Dorsolateral prefrontal cortex (tissue), 120 donors: ENCODE measurements at regions of chr18 and their contacts with region 1.

Region 1: GRCh38 chr18:47930931-47931717 is 665 bp upstream of the SMAD2 start:
- DNase-seq: peak; percentile 94 to 99 (median 97)
- H3K4me3 ChIP-seq: peak overlapping the region; percentile 58 to 97 (median 85)
- H3K27ac ChIP-seq: peak overlapping the region; percentile 76 to 98 (median 96)
- H3K27me3 ChIP-seq: no peaks in the 10 kb centered on the region
- CTCF ChIP-seq: peak in 5 of 56 donors; percentile 9 to 37 (median 17)

Region 2: GRCh38 chr18:47323158-47323557 is 608.0 kb before region 1 on chr18:
- intact Hi-C with region 1: no loop called
- DNase-seq: no peak
- H3K4me3 ChIP-seq: no peak overlapping the region
- H3K27ac ChIP-seq: no peak overlapping the region
- H3K27me3 ChIP-seq: peaks cover 0 to 10% (median 0%) of the 10 kb centered on the region in 45 donors
- CTCF ChIP-seq: no peak

Region 3: DNA sequence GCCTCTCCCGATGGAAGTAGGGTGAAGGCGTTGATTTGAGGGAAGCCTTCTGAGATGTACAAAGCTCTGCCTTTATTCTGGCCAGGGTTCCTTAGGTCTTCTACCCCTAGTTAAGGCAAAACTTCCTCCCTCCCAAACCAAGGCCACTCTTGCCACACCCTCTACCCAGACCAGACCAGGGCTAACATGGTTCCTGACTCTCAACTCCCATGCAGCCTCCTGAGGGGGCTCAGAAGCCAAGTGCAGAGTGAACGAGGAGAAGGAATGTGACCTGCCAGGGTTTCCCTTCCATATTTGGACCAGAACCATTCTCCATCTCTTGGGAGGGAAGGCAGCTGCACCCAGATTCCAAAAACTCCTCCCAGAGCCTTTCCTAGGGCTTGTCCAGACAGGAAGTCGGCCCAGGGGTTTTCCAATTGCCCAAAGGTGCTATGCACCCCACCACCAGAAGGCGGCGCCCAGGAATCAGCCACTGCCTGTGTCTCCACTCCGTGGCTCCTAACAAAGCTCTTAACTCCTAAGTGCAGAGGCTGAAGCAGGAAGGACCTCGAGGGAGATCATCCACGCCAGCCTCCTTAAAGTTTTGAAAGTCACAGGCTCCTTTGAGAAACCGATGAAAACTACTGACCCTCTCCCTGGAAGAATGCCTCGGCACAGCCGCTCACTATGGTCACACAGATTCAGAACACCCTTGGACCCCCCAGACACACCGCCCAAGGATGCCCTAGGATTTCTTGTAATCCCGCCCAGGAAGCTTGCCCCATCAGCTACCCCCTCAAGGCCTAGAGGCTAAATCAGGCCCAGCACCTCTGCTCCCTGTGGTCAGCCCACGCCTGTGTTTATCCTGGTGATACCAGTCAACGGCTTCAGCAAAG is 158.5 kb before region 1 on chr18:
- intact Hi-C with region 1: loop called in 1 of 2 experiments (anchors 10 kb)
- DNase-seq: no peak
- H3K4me3 ChIP-seq: no peak overlapping the region
- H3K27ac ChIP-seq: no peak overlapping the region
- H3K27me3 ChIP-seq: peaks cover 0 to 2% (median 0%) of the 10 kb centered on the region in 45 donors
- CTCF ChIP-seq: peak in 52 of 56 donors; percentile 23 to 68 (median 49)

Region 4: DNA sequence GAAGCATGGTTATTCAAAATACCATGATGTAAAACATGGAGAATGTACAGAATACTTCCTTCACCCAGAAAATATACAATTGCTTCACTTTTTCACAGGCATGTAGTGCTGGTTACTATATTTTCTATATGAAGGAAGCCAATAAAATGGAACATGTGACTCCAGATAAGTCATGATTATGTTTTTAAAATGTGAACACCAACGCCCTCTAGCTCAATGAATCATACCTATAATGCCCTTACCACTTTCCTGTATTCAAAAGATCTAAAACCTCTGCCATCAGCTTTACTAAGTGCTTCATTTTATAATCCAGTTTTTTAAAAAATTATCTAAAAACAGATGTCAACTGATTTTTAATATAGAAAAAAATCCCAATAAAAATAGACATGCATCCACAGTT is 60.5 kb before region 1 on chr18:
- intact Hi-C with region 1: loop called in 1 of 2 experiments (anchors 5 kb)
- DNase-seq: no peak
- H3K4me3 ChIP-seq: no peak overlapping the region
- H3K27ac ChIP-seq: no peak overlapping the region
- H3K27me3 ChIP-seq: no peaks in the 10 kb centered on the region
- CTCF ChIP-seq: no peak

Region 5: DNA sequence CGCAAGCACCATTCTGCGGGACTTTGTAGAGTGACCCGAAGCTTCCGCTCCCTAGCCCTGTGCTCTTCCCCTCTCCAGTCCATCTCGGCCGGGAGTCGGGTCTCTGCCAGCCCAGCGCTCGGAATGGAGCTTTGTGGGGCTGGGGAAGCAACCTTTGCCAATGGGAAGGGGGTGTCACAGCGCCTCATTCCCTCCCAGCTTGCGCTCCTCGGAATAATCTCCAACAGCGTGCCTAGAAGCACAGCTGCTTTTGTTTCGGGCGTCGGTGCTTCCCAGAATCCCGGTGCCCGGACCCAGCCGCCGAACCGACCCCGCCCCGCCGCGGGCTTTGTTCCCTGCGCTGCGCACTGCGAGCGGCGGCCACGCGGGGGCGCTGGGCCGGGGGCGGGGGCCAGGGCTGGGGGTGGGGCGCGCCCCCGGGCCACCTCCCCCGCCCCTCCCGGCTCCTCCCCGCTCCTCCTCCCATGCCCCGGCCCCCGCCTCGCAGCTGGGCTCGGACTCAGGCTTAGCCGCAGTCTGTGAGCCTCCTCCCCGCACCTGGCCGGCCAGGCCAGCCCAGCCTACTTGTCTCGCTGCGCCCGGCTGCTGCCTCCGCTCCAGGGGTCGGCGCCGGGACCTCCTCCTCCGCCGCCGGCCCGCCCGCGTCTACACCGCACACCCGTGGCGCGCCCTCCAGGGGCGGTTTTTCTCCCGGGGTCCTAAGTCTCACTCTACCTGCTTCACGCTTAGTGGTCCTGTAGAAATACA is 77.0 kb after region 1 on chr18:
- intact Hi-C with region 1: loop called in 1 of 2 experiments (anchors 5 kb)
- DNase-seq: peak in 4 of 10 donors; percentile 26 to 68 (median 52)
- H3K4me3 ChIP-seq: peak overlapping the region; percentile 42 to 73 (median 62)
- H3K27ac ChIP-seq: peak overlapping the region in 2 of 59 donors; percentile 31 to 56
- H3K27me3 ChIP-seq: no peaks in the 10 kb centered on the region
- CTCF ChIP-seq: peak in 53 of 56 donors; percentile 19 to 91 (median 58)

Region 6: GRCh38 chr18:48022531-48023329 is 91.6 kb after region 1 on chr18:
- intact Hi-C with region 1: loop called (anchors 5 kb)
- DNase-seq: no peak
- H3K4me3 ChIP-seq: peak overlapping the region in 1 of 59 donors; percentile 25
- H3K27ac ChIP-seq: no peak overlapping the region
- H3K27me3 ChIP-seq: peaks cover 0 to 8% (median 0%) of the 10 kb centered on the region in 45 donors
- CTCF ChIP-seq: peak; percentile 36 to 86 (median 70)

Region 7: DNA sequence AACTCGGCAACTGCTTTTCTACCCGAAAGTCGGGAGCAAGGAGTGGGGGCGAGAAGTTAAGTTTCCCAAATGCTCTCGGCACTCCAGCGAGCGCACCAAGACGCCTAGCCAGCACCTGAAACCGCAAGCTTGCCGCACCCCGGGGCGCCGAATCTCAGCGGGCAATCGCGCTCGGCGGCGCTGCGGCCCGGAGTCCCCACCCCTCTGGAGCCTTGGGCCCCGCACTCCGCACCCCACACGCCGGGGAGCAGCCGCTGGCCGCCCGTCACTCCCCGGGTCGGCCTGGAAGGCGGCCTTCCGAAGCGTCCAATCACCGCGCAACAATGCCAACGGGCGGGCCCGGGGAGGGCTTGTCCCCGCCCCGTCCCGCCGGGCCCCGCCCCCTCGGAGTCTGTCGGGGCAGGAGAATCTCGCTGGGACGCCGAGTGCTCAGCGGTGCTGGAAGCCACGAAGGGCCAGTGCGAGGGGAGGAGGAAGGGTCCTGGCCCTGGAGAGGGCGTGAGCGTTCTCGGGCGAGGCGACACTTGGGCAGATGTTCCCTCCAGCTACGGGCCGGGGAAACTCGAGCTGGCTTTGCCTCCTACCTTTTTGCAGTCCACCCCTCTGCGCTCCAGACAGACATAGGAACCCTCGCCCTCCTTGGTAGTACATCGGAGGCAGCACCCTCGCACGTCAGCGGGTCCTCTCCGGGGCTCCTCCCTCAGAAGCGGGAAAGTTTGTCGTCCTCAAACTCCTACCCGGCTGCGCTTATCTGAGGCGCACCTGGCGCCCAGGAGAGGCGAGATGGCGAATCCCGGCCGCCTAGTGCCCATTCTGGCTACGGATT is 479.2 kb after region 1 on chr18:
- intact Hi-C with region 1: loop called in 1 of 2 experiments (anchors 5 kb)
- DNase-seq: peak; percentile 75 to 93 (median 86)
- H3K4me3 ChIP-seq: peak overlapping the region; percentile 55 to 86 (median 77)
- H3K27ac ChIP-seq: peak overlapping the region in 47 of 59 donors; percentile 19 to 88 (median 66)
- H3K27me3 ChIP-seq: peaks cover 0 to 14% (median 0%) of the 10 kb centered on the region in 45 donors
- CTCF ChIP-seq: peak in 16 of 56 donors; percentile 2 to 50 (median 16)